PC-3 (cell line): ENCODE measurements at regions of chr1 and their contacts with region 1.

Region 1: GRCh38 chr1:206507284-206508129 is at the start of gene RASSF5:
- DNase-seq: peak; percentile 90
- ATAC-seq: peak; percentile 71
- H3K4me3 ChIP-seq: peak within 1 kb of the TSS; percentile 69
- H3K27ac ChIP-seq: no peak within 1 kb of the TSS
- H3K4me1 ChIP-seq: peaks cover 50% of the 10 kb centered on the region
- H3K27me3 ChIP-seq: no peaks in the 10 kb centered on the region
- CTCF ChIP-seq: no peak
- total RNA-seq, gene RASSF5: 15.5 and 16.0 TPM in 2 replicates

Region 2: DNA sequence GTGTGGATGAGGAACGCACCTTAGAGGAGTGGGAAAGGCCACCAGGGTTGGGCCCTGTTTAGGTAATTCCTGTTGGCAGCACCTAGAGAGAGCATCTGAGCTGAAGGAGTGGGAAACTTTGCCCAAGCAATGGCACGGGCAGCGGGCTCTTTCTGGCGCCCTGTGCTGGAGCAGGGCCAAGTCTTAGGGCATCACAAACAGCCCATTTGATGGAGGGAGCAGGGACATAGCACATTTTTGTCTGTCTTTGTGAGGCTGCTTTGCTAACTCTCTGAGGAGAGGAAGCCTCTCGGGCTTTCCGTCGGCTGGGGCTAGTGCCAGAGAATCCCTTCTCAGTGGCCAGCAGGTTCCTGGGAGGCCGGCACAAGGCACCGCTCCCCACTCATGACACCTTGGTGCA is 1487.0 kb before region 1 on chr1:
- CTCF ChIA-PET with region 1: no interaction called
- POLR2A ChIA-PET with region 1: no interaction called
- intact Hi-C with region 1: no loop called
- DNase-seq: no peak
- ATAC-seq: no peak
- H3K4me3 ChIP-seq: no peak overlapping the region
- H3K27ac ChIP-seq: no peak overlapping the region
- H3K4me1 ChIP-seq: no peaks in the 10 kb centered on the region
- H3K27me3 ChIP-seq: peaks cover 92% of the 10 kb centered on the region
- CTCF ChIP-seq: no peak

Region 3: GRCh38 chr1:206589206-206589605 is 81.7 kb after region 1 on chr1:
- CTCF ChIA-PET with region 1: no interaction called
- POLR2A ChIA-PET with region 1: no interaction called
- intact Hi-C with region 1: loop called (anchors 2 kb)
- DNase-seq: peak; percentile 92
- ATAC-seq: peak; percentile 82
- H3K4me3 ChIP-seq: peak overlapping the region; percentile 3; the same call in 1 of the 2 replicates
- H3K27ac ChIP-seq: peak overlapping the region; percentile 83
- H3K4me1 ChIP-seq: peaks cover 58% of the 10 kb centered on the region
- H3K27me3 ChIP-seq: no peaks in the 10 kb centered on the region
- CTCF ChIP-seq: no peak

Region 4: GRCh38 chr1:206738370-206739366 is 231.2 kb after region 1 on chr1:
- CTCF ChIA-PET with region 1: no interaction called
- POLR2A ChIA-PET with region 1: no interaction called
- intact Hi-C with region 1: no loop called
- DNase-seq: peak; percentile 82
- ATAC-seq: peak; percentile 68
- H3K4me3 ChIP-seq: no peak overlapping the region
- H3K27ac ChIP-seq: no peak overlapping the region
- H3K4me1 ChIP-seq: peaks cover 6% of the 10 kb centered on the region
- H3K27me3 ChIP-seq: no peaks in the 10 kb centered on the region
- CTCF ChIP-seq: peak; percentile 95